Activated naive CD4-positive, alpha-beta T cell treated with anti-CD3 and anti-CD28 coated beads for 36 hours (primary cell): ENCODE measurements at regions of chr4 and their contacts with region 1.

Region 1: GRCh38 chr4:158496030-158496741 is 25.5 kb upstream of the RXFP1 start:
- DNase-seq: peak; percentile 71
- H3K4me3 Mint-ChIP-seq: no peak overlapping the region
- H3K27ac Mint-ChIP-seq: no peak overlapping the region
- H3K4me1 Mint-ChIP-seq: no peaks in the 10 kb centered on the region
- H3K27me3 Mint-ChIP-seq: peaks cover 11% of the 10 kb centered on the region

Region 2: DNA sequence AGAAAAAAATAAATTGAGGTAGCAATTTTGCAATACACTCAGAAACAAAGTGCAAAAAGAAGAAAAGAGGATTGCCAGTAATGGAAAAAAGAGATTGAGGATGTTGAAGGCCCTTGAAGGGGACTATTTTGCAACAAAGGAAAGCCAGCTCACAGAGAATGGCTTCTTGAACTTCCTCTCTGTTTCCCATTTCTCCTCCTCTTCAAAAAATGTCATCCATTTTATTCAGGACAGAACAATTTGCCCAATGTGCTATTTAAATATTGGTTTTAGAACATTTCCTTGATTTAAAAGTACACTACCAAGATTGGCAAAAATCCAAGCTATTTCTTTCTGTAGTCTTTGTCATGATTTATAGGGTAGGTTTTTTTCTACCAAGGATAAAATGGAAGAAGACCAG is 383.6 kb before region 1 on chr4:
- CTCF ChIA-PET with region 1: no interaction called
- intact Hi-C with region 1: no loop called
- DNase-seq: no peak
- H3K4me3 Mint-ChIP-seq: no peak overlapping the region
- H3K27ac Mint-ChIP-seq: no peak overlapping the region
- H3K4me1 Mint-ChIP-seq: no peaks in the 10 kb centered on the region
- H3K27me3 Mint-ChIP-seq: peaks cover 2% of the 10 kb centered on the region

Region 3: DNA sequence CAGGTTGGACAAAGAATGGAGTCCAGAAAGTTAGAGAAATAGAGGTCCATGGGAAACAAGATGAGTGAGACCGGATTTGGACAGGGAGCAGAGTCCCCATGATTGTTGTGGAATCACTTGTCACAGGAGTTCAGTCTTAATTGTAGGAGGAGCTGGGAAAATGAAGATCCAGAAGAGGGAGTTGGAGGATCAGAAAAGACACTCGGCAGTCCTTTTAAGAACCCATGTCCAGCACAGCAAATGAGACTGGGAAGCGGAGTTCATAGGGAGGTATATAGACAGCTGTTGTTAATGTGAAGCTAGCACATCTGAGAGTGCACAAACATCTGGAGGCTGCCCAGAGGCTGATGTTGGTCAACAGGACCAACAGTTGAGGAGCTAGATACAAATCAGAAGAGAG is 85.9 kb before region 1 on chr4:
- CTCF ChIA-PET with region 1: no interaction called
- intact Hi-C with region 1: no loop called
- DNase-seq: no peak
- H3K4me3 Mint-ChIP-seq: no peak overlapping the region
- H3K27ac Mint-ChIP-seq: no peak overlapping the region
- H3K4me1 Mint-ChIP-seq: no peaks in the 10 kb centered on the region
- H3K27me3 Mint-ChIP-seq: no peaks in the 10 kb centered on the region

Region 4: GRCh38 chr4:158450741-158451140 is 45.4 kb before region 1 on chr4:
- CTCF ChIA-PET with region 1: no interaction called
- intact Hi-C with region 1: no loop called
- DNase-seq: no peak
- H3K4me3 Mint-ChIP-seq: no peak overlapping the region
- H3K27ac Mint-ChIP-seq: no peak overlapping the region
- H3K4me1 Mint-ChIP-seq: no peaks in the 10 kb centered on the region
- H3K27me3 Mint-ChIP-seq: no peaks in the 10 kb centered on the region

Region 5: DNA sequence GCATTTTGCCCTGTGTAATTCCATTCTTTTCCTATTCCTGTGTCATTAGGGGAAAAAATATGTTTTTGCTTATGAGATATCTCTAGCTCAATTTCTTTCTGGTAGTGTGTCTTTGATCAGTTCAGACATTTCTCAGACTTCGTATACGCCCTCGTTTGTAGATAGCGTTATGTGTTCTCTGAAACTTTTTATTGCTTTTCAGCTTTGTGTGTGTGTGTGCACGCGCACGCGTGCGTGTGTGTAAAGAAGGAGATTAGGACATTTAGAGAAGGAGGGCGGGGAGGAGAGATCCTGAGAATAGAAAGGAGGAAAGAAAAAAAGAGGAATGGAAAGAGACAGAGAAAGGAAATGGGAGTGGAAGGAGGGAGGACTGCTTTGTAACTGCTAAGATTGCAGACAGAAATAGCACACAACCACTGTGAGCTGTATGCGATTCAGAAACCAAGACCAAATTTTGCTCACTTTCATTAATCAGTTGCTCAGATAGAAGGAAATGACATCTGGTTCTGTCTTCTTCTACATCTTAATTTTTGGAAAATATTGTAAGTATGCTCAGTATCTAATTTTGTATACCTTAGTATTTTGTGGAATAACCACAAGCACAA is 25.4 kb after region 1 on chr4 and contains the start of gene RXFP1:
- CTCF ChIA-PET with region 1: no interaction called
- intact Hi-C with region 1: no loop called
- DNase-seq: no peak
- H3K4me3 Mint-ChIP-seq: no peak within 1 kb of the TSS
- H3K27ac Mint-ChIP-seq: no peak within 1 kb of the TSS
- H3K4me1 Mint-ChIP-seq: no peaks in the 10 kb centered on the region
- H3K27me3 Mint-ChIP-seq: peaks cover 9% of the 10 kb centered on the region
- total RNA-seq, gene RXFP1: not detected

Region 6: GRCh38 chr4:158578476-158578875 is 82.3 kb after region 1 on chr4:
- CTCF ChIA-PET with region 1: no interaction called
- intact Hi-C with region 1: loop called (anchors 2 kb)
- DNase-seq: no peak
- H3K4me3 Mint-ChIP-seq: no peak overlapping the region
- H3K27ac Mint-ChIP-seq: no peak overlapping the region
- H3K4me1 Mint-ChIP-seq: no peaks in the 10 kb centered on the region
- H3K27me3 Mint-ChIP-seq: peaks cover 2% of the 10 kb centered on the region

Region 7: DNA sequence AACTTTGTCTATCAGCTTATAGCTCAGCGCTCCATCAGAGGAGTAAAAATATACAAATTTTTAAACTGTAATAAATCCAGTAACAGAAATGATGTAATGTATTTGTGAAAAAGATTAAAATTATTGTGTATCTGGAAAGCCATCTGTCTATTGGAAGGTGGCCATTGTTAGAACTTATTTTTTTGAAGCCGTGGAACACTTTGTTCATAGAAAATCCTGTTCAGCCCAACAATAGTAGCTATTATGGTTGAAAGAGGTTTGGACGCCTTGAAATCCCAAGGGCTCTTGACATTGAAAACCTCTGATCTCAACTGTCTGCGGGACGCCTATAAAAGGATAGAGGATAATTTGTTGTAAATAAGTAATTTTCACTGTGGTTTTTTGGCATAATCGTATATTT is 705.0 kb after region 1 on chr4:
- CTCF ChIA-PET with region 1: interaction called, 3 read pairs
- intact Hi-C with region 1: loop called (anchors 5 kb)
- DNase-seq: no peak
- H3K4me3 Mint-ChIP-seq: no peak overlapping the region
- H3K27ac Mint-ChIP-seq: no peak overlapping the region
- H3K4me1 Mint-ChIP-seq: peaks cover 30% of the 10 kb centered on the region
- H3K27me3 Mint-ChIP-seq: no peaks in the 10 kb centered on the region